ENCODE measurements at regions of chrX and their contacts with region 1.

Region 1: GRCh38 chrX:40146262-40147125 is 48.7 kb upstream of the BCOR start:
- DNase-seq: peak in 2 of 3 donors; percentile 62 to 71
- ATAC-seq: peak; percentile 46 to 50
- H3K4me3 ChIP-seq: peak overlapping the region; percentile 60
- H3K27ac ChIP-seq: no peak overlapping the region
- H3K4me1 ChIP-seq: peaks cover 15% of the 10 kb centered on the region
- H3K27me3 ChIP-seq: no peaks in the 10 kb centered on the region

Region 2: DNA sequence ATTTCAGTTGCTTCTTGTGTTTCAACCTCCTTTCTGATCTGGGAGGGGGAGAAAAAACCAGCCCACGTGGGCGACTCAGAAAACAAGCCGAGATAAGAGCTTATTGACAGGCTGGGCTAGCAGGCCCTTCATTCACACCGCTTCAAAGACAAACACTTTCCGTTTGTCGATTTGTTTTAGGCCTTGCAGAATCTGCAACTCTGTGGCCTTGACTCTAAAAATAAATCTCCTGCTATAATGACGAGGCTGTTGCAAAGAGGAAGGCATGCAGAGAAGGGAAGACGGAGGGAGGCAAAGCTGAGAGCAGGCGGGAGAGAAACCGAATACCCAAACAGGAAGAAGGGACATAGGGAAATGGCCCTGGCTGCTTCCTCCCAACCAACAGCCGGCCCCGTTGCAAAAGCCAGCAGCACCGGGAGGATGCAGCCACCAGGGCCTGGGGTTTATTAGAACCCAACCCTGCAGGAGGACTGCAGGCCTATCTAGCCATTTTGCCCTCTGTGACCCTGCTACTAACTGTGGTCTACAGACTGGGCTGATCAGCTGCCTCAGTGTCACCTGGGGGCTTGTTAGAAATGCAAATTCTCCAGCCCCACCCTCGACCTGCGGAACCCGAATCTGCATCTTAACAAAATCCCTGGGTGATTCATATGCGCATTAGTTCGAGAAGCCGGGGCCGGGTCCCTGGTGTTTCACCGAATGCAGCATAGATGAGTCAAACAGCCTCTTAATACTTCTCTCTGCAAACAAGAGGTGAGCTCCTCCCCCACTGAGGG is 374.2 kb before region 1 on chrX:
- intact Hi-C with region 1: no loop called
- DNase-seq: peak in 2 of 3 donors; percentile 54 to 65
- ATAC-seq: peak; percentile 47 to 50
- H3K4me3 ChIP-seq: no peak overlapping the region
- H3K27ac ChIP-seq: peak overlapping the region; percentile 50
- H3K4me1 ChIP-seq: no peaks in the 10 kb centered on the region
- H3K27me3 ChIP-seq: no peaks in the 10 kb centered on the region

Region 3: GRCh38 chrX:40054792-40055191 is 91.7 kb before region 1 on chrX:
- intact Hi-C with region 1: no loop called
- DNase-seq: no peak
- ATAC-seq: no peak
- H3K4me3 ChIP-seq: no peak overlapping the region
- H3K27ac ChIP-seq: no peak overlapping the region
- H3K4me1 ChIP-seq: no peaks in the 10 kb centered on the region
- H3K27me3 ChIP-seq: no peaks in the 10 kb centered on the region

Region 4: GRCh38 chrX:40108959-40109287 is 37.6 kb before region 1 on chrX:
- intact Hi-C with region 1: loop called in 3 of 4 experiments (anchors 5 to 10 kb)
- DNase-seq: peak; percentile 85 to 93 (median 92)
- ATAC-seq: peak; percentile 75 to 78
- H3K4me3 ChIP-seq: peak overlapping the region; percentile 84
- H3K27ac ChIP-seq: peak overlapping the region; percentile 89
- H3K4me1 ChIP-seq: no peaks in the 10 kb centered on the region
- H3K27me3 ChIP-seq: no peaks in the 10 kb centered on the region